ENCODE measurements at regions of chr5 and their contacts with region 1.

Region 1: GRCh38 chr5:124519396-124519795 is 227.0 kb downstream of the ZNF608 start:
- DNase-seq: no peak
- H3K4me3 ChIP-seq: no peak overlapping the region
- H3K27ac ChIP-seq: no peak overlapping the region
- H3K4me1 ChIP-seq: peaks cover 13 to 16% of the 10 kb centered on the region in 2 donors
- H3K27me3 ChIP-seq: no peaks in the 10 kb centered on the region
- CTCF ChIP-seq: no peak
- POLR2A ChIP-seq: no peak

Region 2: DNA sequence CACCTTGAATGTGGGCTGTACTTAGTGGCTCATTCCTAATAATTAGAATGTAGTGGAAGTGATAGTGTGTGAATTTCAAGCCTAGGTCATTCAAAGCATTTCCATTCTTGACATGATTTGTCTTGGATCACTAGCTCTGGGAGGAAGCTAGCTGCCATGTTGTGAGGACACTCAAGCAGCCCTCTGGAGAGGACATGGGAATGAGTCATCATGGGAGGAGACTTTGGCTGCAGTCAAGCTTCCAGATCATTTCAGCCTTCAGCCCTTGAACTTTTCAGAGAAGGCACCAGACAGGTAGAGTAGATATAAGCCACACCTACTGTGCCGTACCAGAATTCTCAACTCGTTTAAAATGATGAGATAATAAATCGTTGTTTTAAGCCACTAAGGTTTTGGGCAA is 279.8 kb before region 1 on chr5:
- intact Hi-C with region 1: no loop called
- DNase-seq: no peak
- H3K4me3 ChIP-seq: no peak overlapping the region
- H3K27ac ChIP-seq: no peak overlapping the region
- H3K4me1 ChIP-seq: no peaks in the 10 kb centered on the region
- H3K27me3 ChIP-seq: no peaks in the 10 kb centered on the region
- CTCF ChIP-seq: no peak
- POLR2A ChIP-seq: no peak

Region 3: GRCh38 chr5:124274949-124275348 is 244.4 kb before region 1 on chr5:
- intact Hi-C with region 1: loop called (anchors 5 kb)
- DNase-seq: no peak
- H3K4me3 ChIP-seq: no peak overlapping the region
- H3K27ac ChIP-seq: no peak overlapping the region
- H3K4me1 ChIP-seq: no peaks in the 10 kb centered on the region
- H3K27me3 ChIP-seq: no peaks in the 10 kb centered on the region
- CTCF ChIP-seq: no peak
- POLR2A ChIP-seq: no peak

Measured in thyroid gland (tissue), 4 donors.